ENCODE measurements at regions of chr3 and their contacts with region 1.

Region 1: DNA sequence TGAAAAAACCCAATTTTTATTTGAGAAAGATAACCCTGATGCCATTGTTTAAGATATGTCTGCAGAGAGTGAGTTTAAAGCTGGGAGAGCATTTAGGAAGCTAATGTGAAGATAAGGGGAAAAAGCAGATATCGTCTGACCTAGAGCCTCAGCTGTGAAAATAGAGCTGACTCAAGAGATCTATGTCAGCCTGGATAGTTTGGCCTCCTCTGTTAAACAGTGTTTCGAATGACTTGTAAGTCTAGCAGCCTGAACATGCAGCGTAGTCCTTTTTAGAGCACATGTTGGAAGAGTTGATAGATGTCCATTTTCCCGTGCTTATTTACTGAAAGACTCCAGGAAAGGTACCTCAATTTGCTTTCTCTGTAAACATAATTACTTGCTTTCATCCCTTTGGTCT is 48.1 kb downstream of the ALCAM start:
- DNase-seq: no peak
- ATAC-seq: no peak
- H3K4me3 ChIP-seq: no peak overlapping the region
- H3K4me3 Mint-ChIP-seq: no peak overlapping the region
- H3K27ac ChIP-seq: no peak overlapping the region
- H3K27ac Mint-ChIP-seq: no peak overlapping the region
- H3K4me1 ChIP-seq: no peaks in the 10 kb centered on the region
- H3K4me1 Mint-ChIP-seq: no peaks in the 10 kb centered on the region
- H3K27me3 ChIP-seq: no peaks in the 10 kb centered on the region
- H3K27me3 Mint-ChIP-seq: no peaks in the 10 kb centered on the region

Region 2: DNA sequence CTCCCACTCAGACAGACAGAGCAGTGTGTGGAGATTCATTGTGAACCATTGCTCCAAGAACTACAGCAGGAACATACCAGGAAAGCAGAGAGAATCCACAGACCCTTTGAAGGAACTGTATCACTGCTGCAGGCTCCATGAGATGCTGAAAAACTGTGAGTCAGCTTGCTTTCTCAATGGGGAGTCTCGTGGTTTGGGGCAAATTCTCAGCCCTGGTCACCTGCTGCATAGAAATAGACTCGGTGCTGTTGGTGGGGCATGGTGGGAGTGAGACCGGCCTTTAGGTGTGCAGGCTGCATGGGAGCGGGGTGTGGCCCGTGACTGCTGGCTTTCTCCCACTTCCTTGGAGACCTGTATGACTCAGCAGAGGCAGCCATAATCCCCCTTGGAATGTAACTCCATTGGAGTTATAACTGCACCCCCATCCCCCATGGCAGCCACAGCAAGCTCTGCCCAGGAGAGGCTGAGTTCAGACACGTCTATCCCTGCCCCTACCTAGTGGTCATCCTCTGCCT is 12.5 kb before region 1 on chr3:
- CTCF ChIA-PET with region 1: interaction called in 1 of 2 experiments, 3 read pairs
- POLR2A ChIA-PET with region 1: interaction called in 1 of 2 experiments, 14 read pairs
- DNase-seq: no peak
- ATAC-seq: no peak
- H3K4me3 ChIP-seq: no peak overlapping the region
- H3K4me3 Mint-ChIP-seq: no peak overlapping the region
- H3K27ac ChIP-seq: no peak overlapping the region
- H3K27ac Mint-ChIP-seq: no peak overlapping the region
- H3K4me1 ChIP-seq: no peaks in the 10 kb centered on the region
- H3K4me1 Mint-ChIP-seq: no peaks in the 10 kb centered on the region
- H3K27me3 ChIP-seq: no peaks in the 10 kb centered on the region
- H3K27me3 Mint-ChIP-seq: peaks cover 0 to 2% of the 10 kb centered on the region in 2 donors